ENCODE measurements at regions of chr12 and their contacts with region 1.

Region 1: GRCh38 chr12:99043319-99043914 is 398.3 kb downstream of the APAF1 start:
- DNase-seq: peak; percentile 74
- ATAC-seq: no peak
- H3K4me3 Mint-ChIP-seq: no peak overlapping the region
- H3K27ac Mint-ChIP-seq: no peak overlapping the region
- H3K4me1 Mint-ChIP-seq: no peaks in the 10 kb centered on the region
- H3K27me3 Mint-ChIP-seq: peaks cover 7% of the 10 kb centered on the region

Region 2: DNA sequence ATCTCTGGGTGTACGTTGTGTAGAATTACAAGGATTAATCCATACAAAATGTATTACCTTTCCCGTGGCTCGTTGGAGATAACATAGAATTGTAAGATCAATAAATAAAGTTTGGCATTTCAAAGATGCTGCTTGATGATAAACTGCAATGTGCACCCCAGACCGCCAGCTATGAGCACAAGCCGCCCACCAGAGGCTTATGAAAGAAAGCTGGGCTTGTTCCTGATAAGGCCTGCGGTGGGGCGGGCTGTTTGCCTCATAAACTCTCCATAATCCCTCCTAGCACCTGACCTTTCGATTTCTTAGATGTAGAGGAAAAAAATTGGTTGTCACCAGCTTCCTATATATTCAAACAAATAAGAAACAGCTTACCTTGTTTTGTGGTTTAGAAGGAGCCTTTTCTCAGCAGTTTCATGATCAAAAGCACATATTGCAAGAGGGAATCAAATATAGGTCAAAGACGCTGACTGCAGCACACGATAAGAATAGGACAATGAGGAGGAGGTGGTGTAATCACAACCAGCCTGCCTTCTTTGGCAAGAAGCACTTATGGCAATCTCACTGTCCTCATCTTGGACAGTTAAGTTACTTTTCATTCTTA is 1287.3 kb before region 1 on chr12:
- CTCF ChIA-PET with region 1: no interaction called
- POLR2A ChIA-PET with region 1: no interaction called
- intact Hi-C with region 1: no loop called
- DNase-seq: no peak
- ATAC-seq: no peak
- H3K4me3 Mint-ChIP-seq: no peak overlapping the region
- H3K27ac Mint-ChIP-seq: no peak overlapping the region
- H3K4me1 Mint-ChIP-seq: no peaks in the 10 kb centered on the region
- H3K27me3 Mint-ChIP-seq: no peaks in the 10 kb centered on the region

Region 3: DNA sequence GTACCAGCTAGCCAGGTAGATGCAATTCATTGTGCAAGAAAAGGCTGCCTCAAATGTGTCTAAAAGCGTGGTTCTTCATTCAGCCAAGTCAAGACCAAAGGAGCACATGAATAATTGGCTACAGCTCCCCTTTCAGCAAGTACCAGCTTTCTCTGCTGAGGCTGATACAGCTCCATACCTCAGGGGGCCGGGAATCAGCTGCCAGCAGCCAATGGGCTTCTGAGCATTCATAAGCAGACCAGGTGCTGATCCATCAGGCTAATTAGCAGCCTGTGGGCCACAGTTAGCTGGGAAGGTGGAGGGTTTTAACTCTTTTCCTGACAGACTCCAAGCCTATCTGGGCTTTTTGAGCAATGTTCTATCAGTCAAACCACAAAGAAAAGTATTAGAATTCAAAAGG is 133.7 kb before region 1 on chr12:
- CTCF ChIA-PET with region 1: no interaction called
- POLR2A ChIA-PET with region 1: no interaction called
- intact Hi-C with region 1: no loop called
- DNase-seq: no peak
- ATAC-seq: no peak
- H3K4me3 Mint-ChIP-seq: no peak overlapping the region
- H3K27ac Mint-ChIP-seq: no peak overlapping the region
- H3K4me1 Mint-ChIP-seq: no peaks in the 10 kb centered on the region
- H3K27me3 Mint-ChIP-seq: peaks cover 2% of the 10 kb centered on the region

Region 4: DNA sequence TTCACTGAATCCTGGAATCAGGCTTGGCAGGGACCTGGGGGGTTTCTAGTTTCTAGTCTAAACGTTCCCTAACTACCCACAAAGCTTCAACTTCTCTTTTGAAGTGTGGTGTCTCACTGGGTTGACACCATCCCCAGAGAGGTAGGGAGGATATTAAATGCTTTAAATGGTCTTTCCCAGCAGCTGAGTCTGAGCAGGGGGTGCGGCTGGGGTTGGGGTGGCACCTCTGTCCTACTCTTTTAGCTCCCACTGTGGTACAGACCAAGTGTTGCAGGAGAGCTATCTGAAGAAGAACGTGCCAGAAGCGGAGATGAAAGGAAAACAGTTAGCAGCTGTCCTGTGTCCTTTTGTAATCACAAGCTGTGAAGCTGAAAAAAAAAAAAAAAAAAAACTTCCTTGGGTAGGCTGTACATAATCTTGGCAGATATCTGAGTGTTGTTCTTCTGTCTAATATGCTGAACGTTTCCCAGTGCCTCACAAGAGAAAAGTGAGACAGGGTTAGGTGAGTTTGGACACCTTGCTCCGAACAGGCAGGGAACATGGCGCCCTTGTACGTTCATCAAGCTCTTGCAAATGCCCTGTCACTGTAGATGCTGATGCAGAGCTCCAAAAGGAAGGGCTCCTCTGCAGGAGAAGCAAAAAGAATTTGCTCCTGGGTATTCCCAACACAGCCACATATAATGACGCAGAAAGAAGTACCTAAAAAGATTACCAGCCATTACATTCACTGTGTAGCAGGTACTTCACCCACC is 48.9 kb after region 1 on chr12:
- CTCF ChIA-PET with region 1: interaction called, 10 read pairs
- POLR2A ChIA-PET with region 1: no interaction called
- intact Hi-C with region 1: no loop called
- DNase-seq: no peak
- ATAC-seq: no peak
- H3K4me3 Mint-ChIP-seq: no peak overlapping the region
- H3K27ac Mint-ChIP-seq: no peak overlapping the region
- H3K4me1 Mint-ChIP-seq: no peaks in the 10 kb centered on the region
- H3K27me3 Mint-ChIP-seq: peaks cover 2% of the 10 kb centered on the region

Region 5: GRCh38 chr12:99619389-99620158 is 576.2 kb after region 1 on chr12:
- CTCF ChIA-PET with region 1: interaction called, 4 read pairs
- POLR2A ChIA-PET with region 1: no interaction called
- intact Hi-C with region 1: loop called (anchors 1 to 5 kb)
- DNase-seq: peak; percentile 19
- ATAC-seq: no peak
- H3K4me3 Mint-ChIP-seq: no peak overlapping the region
- H3K27ac Mint-ChIP-seq: no peak overlapping the region
- H3K4me1 Mint-ChIP-seq: no peaks in the 10 kb centered on the region
- H3K27me3 Mint-ChIP-seq: no peaks in the 10 kb centered on the region

Region 6: DNA sequence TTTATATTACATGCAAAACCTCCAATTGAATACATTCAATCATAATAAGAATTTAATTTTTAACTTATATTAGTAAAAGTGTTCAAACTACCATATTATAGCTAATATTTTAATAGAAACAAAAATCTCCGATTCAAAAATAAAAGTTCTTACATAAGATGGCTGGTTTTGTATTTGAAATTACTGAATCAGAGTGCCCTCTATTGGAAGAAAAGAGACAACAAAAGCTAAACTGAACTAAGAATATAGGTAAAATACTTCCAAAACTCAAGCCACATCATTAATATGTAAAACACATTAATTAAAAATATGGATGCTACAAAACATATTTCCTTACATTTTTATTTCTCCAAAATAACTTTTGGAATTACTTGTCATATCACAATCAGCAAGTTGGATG is 724.4 kb after region 1 on chr12:
- CTCF ChIA-PET with region 1: interaction called, 6 read pairs
- POLR2A ChIA-PET with region 1: no interaction called
- intact Hi-C with region 1: loop called (anchors 2 to 5 kb)
- DNase-seq: no peak
- ATAC-seq: no peak
- H3K4me3 Mint-ChIP-seq: no peak overlapping the region
- H3K27ac Mint-ChIP-seq: no peak overlapping the region
- H3K4me1 Mint-ChIP-seq: no peaks in the 10 kb centered on the region
- H3K27me3 Mint-ChIP-seq: no peaks in the 10 kb centered on the region

Region 7: DNA sequence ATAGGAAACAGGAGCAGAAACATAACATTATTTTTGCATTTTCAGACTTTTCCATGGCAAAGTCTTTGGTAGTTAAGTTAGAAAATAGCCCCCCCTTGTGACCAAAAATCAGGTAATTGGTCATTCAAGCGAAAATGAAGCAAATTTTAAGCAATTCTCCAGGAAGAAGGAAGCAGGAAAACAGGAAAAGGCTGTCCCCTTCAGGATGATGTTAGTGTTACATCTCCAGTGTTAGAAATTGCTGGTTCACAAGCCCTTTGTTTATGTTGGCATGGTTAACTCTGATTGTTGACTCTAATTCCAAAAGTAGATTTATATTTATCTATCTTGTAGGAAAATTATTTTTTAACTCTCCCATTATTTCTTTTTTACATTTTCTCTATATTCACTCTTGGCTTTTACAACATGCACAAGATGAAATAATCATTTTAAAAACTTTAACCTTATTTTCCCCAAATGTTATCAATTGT is 1511.2 kb after region 1 on chr12:
- CTCF ChIA-PET with region 1: no interaction called
- POLR2A ChIA-PET with region 1: no interaction called
- intact Hi-C with region 1: loop called in 1 of 2 experiments (anchors 2 kb)
- DNase-seq: no peak
- ATAC-seq: no peak
- H3K4me3 Mint-ChIP-seq: no peak overlapping the region
- H3K27ac Mint-ChIP-seq: no peak overlapping the region
- H3K4me1 Mint-ChIP-seq: no peaks in the 10 kb centered on the region
- H3K27me3 Mint-ChIP-seq: peaks cover 2% of the 10 kb centered on the region